ENCODE measurements at regions of chr2 and their contacts with region 1.

Region 1: GRCh38 chr2:23384551-23385349 is at the start of gene KLHL29:
- DNase-seq: peak in 1 of 2 donors; percentile 88
- H3K4me3 ChIP-seq: peak within 1 kb of the TSS; percentile 79 to 86
- H3K27ac ChIP-seq: peak within 1 kb of the TSS; percentile 80 to 87
- H3K4me1 ChIP-seq: peaks cover 0 to 2% of the 10 kb centered on the region in 2 donors
- H3K27me3 ChIP-seq: no peaks in the 10 kb centered on the region
- CTCF ChIP-seq: no peak
- total RNA-seq, gene KLHL29: 16.3 TPM

Region 2: GRCh38 chr2:23135481-23136100 is 249.2 kb before region 1 on chr2:
- intact Hi-C with region 1: loop called (anchors 5 kb)
- DNase-seq: peak; percentile 23 to 82
- H3K4me3 ChIP-seq: peak overlapping the region in 1 of 2 donors; percentile 29
- H3K27ac ChIP-seq: peak overlapping the region; percentile 44 to 58
- H3K4me1 ChIP-seq: peaks cover 0 to 9% of the 10 kb centered on the region in 2 donors
- H3K27me3 ChIP-seq: no peaks in the 10 kb centered on the region
- CTCF ChIP-seq: no peak

Region 3: DNA sequence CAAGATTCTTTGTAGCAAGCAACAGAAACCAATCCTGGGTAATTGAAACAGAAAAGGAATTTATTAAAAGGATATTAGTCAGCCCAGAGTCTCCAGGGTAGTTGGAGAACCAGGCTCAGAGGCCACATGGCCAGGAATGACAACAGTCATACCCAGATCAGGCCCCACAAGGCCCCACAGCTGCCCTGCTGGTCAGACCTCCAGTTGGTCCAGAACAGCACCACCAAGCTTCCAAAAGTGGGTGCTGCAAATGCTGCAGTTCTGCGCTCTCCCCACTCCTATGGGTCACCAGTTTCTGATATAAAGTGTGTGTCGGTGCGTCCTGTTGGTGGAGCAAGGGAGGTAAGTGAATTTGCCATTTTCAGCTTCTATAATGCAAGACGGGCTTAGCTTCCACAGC is 30.1 kb after region 1 on chr2:
- intact Hi-C with region 1: loop called (anchors 1 kb)
- DNase-seq: peak in 1 of 2 donors; percentile 57
- H3K4me3 ChIP-seq: no peak overlapping the region
- H3K27ac ChIP-seq: no peak overlapping the region
- H3K4me1 ChIP-seq: peaks cover 5 to 20% of the 10 kb centered on the region in 2 donors
- H3K27me3 ChIP-seq: no peaks in the 10 kb centered on the region
- CTCF ChIP-seq: no peak

Region 4: DNA sequence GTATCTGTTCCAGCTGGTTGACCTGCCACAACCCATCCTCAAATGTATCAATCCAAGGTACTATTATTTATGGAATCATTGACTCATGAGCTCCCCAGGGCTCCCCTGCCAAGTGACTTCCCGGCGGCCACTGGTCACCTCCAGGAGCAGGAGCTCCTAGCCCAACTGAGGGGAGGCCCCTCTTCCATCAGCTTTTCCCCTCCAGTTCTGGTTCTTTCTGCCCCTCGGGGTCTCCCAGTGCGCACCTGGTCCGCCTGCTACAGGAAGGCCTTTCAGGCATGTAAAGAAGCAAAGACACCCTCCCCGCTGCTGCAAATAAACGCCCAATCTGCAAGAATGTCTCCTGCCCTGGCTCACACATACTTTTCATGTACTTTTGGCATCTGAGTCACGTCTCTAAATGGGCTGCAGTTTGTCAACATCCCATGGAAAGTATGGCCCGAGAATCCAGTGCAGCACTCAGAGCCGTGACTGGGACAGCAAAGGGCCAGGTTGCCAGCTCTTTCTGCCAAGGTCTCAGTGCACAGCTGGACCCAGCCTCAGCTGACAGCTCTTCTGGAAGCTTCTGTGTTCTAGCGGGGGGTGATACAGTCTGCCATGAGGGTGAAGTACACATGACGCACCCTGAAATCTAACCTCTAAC is 41.6 kb after region 1 on chr2:
- intact Hi-C with region 1: loop called (anchors 1 kb)
- DNase-seq: peak; percentile 51 to 91
- H3K4me3 ChIP-seq: no peak overlapping the region
- H3K27ac ChIP-seq: peak overlapping the region; percentile 74 to 83
- H3K4me1 ChIP-seq: peaks cover 9 to 21% of the 10 kb centered on the region in 2 donors
- H3K27me3 ChIP-seq: no peaks in the 10 kb centered on the region
- CTCF ChIP-seq: no peak

Region 5: DNA sequence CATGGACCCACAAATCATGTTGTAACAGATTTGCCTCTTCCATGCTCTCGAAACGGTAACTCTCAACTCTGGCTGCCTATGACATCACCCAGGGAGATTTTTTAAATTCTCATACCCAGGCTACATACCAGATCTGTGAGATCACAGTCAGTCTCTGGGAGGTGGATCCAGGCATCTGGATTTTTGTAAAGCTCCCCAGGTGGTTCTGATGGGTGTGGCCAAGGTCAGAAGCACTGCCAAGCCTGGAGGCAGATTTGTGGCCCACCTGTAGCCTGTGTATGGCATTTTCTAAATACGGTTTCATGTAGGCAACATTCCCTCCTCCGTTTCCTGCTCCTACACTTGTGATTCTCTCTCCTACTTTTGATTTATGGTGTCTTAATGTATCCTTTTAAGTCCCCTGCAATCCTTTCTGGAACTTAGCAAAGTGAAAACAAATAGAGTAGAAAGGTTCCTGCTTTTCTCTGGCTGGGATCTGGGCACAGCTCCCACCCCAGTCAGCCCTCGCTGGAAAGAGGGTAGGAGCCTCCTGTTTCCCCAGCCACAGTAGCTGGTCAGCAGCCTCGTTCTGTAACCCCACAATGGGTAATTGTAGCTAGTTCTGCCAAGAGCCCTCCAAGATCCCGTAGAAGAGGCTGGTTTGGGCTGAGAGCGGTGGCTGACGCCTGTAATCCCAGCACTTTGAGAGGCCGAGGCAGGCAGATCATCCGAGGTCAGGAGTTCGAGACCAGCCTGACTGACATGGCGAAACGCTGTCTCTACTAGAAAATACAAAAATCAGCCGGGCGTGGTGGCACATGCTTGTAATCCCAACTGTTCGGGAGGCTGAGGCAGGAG is 96.5 kb after region 1 on chr2:
- intact Hi-C with region 1: loop called (anchors 5 kb)
- DNase-seq: no peak
- H3K4me3 ChIP-seq: no peak overlapping the region
- H3K27ac ChIP-seq: peak overlapping the region; percentile 29 to 72
- H3K4me1 ChIP-seq: peaks cover 0 to 10% of the 10 kb centered on the region in 2 donors
- H3K27me3 ChIP-seq: no peaks in the 10 kb centered on the region
- CTCF ChIP-seq: no peak

Region 6: DNA sequence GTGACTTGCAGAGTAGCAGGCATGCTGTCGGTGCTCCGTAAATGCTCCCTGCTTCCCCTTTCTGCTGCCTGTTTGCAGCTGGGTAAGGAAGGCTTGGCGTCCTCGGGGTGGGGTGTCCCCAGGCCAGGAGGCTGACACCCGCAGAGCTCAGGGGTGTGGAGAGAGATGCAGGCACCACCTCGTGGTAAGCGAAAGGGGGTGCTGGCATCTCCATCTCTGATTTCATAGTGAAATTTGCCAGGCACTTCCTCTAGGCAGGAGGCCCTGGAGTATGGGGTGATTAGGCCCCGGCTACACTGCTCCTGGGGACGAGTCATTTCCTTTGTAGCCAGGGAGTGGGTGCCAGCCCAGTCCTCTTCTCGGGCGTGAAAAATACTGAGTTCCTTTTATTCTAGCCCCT is 160.6 kb after region 1 on chr2:
- intact Hi-C with region 1: no loop called
- DNase-seq: no peak
- H3K4me3 ChIP-seq: no peak overlapping the region
- H3K27ac ChIP-seq: peak overlapping the region in 1 of 2 donors; percentile 58
- H3K4me1 ChIP-seq: peaks cover 0 to 9% of the 10 kb centered on the region in 2 donors
- H3K27me3 ChIP-seq: no peaks in the 10 kb centered on the region
- CTCF ChIP-seq: no peak

Region 7: DNA sequence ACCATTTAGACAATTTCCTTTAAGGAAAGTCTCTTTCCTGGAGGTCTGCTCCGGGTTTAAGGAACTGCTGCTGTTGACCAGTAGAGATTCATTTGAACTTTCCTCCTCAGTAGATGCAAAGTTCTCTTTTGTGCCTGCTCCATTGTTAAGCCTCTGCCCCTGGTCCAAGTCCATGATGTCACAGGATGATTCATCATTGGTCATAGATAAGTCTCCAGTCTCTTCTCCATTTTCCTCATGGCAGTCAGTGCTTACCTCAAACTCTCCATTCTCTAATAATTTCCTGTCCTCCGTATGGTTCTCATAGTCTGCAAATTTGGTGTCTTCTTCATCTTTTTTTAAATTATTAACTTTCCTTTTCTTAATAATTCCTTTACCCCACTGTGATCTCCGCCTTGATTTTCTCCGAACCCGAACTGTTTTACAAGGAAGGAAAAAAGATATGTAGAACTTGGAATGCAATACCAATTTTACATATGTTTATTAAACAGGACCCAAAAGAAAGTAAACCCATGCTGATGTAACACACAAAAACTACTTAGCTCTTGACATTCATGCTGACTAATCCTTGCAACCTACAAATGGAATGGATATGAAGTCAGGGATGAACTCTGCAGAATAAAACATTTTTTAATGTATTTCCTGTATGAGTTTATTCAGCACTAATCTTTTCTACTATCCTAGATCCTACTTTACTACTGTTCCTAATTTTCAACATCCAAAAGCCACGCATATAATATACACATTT is 373.1 kb after region 1 on chr2:
- intact Hi-C with region 1: loop called (anchors 10 kb)
- DNase-seq: peak in 1 of 2 donors; percentile 64
- H3K4me3 ChIP-seq: no peak overlapping the region
- H3K27ac ChIP-seq: no peak overlapping the region
- H3K4me1 ChIP-seq: no peaks in the 10 kb centered on the region
- H3K27me3 ChIP-seq: no peaks in the 10 kb centered on the region
- CTCF ChIP-seq: no peak